HCT116 (cell line): ENCODE measurements at regions of chr17 and their contacts with region 1.

Region 1: GRCh38 chr17:20226814-20227482 is 217.8 kb downstream of the SPECC1 start:
- DNase-seq: peak; percentile 34
- ATAC-seq: peak; percentile 100
- H3K4me3 ChIP-seq: no peak overlapping the region
- H3K27ac ChIP-seq: no peak overlapping the region
- H3K4me1 ChIP-seq: 0 out of 4 replicates have a peak, but pooled peaks cover 0 to 3% of the 10 kb centered on the region in 2 experiments
- H3K27me3 ChIP-seq: no peaks in the 10 kb centered on the region
- CTCF ChIP-seq: peak; percentile 86 to 95 (median 94)
- POLR2A ChIP-seq: no peak
- RAD21 ChIP-seq: peak; percentile 83

Region 2: GRCh38 chr17:20315821-20316220 is 88.9 kb after region 1 on chr17:
- CTCF ChIA-PET with region 1: interaction called, 18 read pairs
- POLR2A ChIA-PET with region 1: no interaction called
- RAD21 ChIA-PET with region 1: no interaction called
- intact Hi-C with region 1: loop called (anchors 1 kb)
- DNase-seq: no peak
- ATAC-seq: no peak
- H3K4me3 ChIP-seq: no peak overlapping the region
- H3K27ac ChIP-seq: no peak overlapping the region
- H3K4me1 ChIP-seq: no peaks in the 10 kb centered on the region
- H3K27me3 ChIP-seq: no peaks in the 10 kb centered on the region
- CTCF ChIP-seq: no peak
- POLR2A ChIP-seq: no peak
- RAD21 ChIP-seq: no peak